Lower lobe of right lung (tissue), 2 donors: ENCODE measurements at regions of chr6 and their contacts with region 1.

Region 1: GRCh38 chr6:24415753-24416152 is 13.0 kb downstream of the MRS2 start:
- DNase-seq: no peak
- ATAC-seq: no peak
- H3K4me3 ChIP-seq: no peak overlapping the region
- H3K27ac ChIP-seq: no peak overlapping the region
- H3K4me1 ChIP-seq: no peaks in the 10 kb centered on the region
- H3K27me3 ChIP-seq: no peaks in the 10 kb centered on the region
- CTCF ChIP-seq: no peak

Region 2: DNA sequence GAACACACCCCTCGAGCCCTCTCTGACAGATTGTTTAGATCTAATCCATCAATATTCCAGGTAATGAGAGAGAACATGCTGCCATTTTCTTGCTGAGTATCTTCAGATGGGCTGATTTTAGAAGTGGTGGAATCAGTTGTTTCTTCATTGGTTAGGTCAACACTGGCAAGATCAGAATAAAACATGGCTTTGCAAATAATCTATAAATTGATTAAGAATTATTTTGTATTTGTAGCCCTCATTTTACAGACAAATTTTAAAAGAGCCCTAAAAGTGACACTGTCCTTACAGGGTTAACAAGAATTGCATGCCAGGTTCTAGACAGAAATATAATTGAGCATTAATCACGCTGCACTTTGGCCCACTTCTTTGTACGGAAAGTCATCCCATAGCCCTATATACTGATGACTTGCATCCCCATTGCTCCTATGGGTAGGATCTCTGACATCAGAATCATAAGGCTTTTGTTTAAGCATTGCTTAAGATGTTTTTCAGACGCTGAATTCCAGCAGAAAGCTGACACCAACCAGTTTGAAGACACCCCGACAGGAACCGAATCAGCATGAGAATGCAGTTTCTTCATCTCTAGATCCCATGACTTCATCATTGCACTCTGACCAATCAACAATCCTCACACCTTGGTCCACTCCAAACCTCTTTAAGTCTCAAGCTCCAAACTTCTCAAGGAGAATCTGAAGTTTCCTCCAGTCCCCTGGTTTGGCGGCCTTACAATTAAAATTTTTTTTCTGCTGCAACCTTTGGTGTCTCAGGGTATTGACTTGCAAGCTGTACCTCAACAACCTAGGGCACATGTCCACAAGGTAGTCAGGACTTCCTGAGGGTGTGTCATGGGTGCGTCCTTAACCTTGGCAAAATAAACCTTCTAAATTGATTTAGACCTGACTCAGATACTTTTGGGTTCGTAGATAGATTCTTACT is 243.1 kb after region 1 on chr6:
- intact Hi-C with region 1: no loop called
- DNase-seq: no peak
- ATAC-seq: peak; percentile 85 to 86
- H3K4me3 ChIP-seq: no peak overlapping the region
- H3K27ac ChIP-seq: peak overlapping the region; percentile 32
- H3K4me1 ChIP-seq: peaks cover 14% of the 10 kb centered on the region
- H3K27me3 ChIP-seq: no peaks in the 10 kb centered on the region
- CTCF ChIP-seq: no peak

Region 3: GRCh38 chr6:24699521-24700359 is 284.0 kb after region 1 on chr6:
- intact Hi-C with region 1: loop called (anchors 5 kb)
- DNase-seq: no peak
- ATAC-seq: no peak
- H3K4me3 ChIP-seq: no peak overlapping the region
- H3K27ac ChIP-seq: no peak overlapping the region
- H3K4me1 ChIP-seq: no peaks in the 10 kb centered on the region
- H3K27me3 ChIP-seq: no peaks in the 10 kb centered on the region
- CTCF ChIP-seq: no peak

Region 4: GRCh38 chr6:24883618-24884017 is 467.9 kb after region 1 on chr6:
- intact Hi-C with region 1: no loop called
- DNase-seq: no peak
- ATAC-seq: no peak
- H3K4me3 ChIP-seq: no peak overlapping the region
- H3K27ac ChIP-seq: no peak overlapping the region
- H3K4me1 ChIP-seq: no peaks in the 10 kb centered on the region
- H3K27me3 ChIP-seq: no peaks in the 10 kb centered on the region
- CTCF ChIP-seq: no peak